PC-9 (cell line): ENCODE measurements at regions of chr1 and their contacts with region 1.

Region 1: GRCh38 chr1:235938709-235939479 is 72.2 kb upstream of the LYST start:
- DNase-seq: no peak
- H3K4me3 ChIP-seq: no peak overlapping the region
- H3K27ac ChIP-seq: no peak overlapping the region
- H3K4me1 ChIP-seq: peaks cover 10% of the 10 kb centered on the region
- H3K27me3 ChIP-seq: no peaks in the 10 kb centered on the region
- CTCF ChIP-seq: no peak

Region 2: DNA sequence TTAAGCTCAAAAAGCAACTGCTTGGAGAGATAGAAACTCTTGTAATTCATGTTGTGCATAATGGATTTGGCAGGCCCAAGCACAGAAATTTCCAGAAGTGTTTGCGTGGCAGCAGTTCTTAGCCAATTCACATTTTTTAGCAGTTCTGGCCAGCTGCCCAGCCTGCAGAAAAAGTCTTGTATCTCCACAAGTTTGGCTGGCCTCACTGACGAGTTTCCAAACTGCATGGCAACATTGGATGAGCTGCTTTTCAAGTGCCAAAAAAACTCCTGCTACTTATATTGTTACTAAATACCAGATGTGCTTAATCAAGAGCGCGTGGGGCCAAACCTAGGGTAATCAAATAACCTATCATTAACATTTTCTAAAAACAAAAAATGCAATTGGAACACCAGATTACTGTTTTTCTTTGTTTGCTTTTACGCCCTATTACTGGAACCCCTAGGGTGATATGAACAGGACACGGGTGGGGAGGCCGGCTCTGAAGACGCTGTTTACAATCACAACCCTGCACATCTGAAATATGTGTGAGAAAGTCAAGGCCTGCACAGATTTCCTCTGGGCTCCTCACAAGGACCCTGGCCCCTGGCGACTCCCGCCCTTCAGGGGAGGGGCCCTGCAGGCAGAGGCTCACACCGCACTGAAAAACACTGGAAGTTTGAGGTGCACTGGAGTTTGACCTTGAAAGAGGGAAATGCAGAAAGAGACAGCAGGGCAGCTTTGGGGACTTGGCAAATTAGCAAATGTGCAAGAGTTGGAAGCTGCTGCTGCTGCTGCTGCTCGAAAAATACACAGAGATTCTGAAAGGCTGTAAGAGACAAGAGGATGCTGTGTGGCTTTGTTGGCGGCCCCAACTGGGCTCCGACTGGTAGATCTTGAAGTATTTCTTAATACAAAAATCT is 1404.7 kb before region 1 on chr1:
- CTCF ChIA-PET with region 1: no interaction called
- POLR2A ChIA-PET with region 1: no interaction called
- intact Hi-C with region 1: no loop called
- DNase-seq: peak; percentile 28 to 56
- H3K4me3 ChIP-seq: no peak overlapping the region
- H3K27ac ChIP-seq: peak overlapping the region; percentile 90
- H3K4me1 ChIP-seq: peaks cover 49% of the 10 kb centered on the region
- H3K27me3 ChIP-seq: no peaks in the 10 kb centered on the region
- CTCF ChIP-seq: no peak

Region 3: DNA sequence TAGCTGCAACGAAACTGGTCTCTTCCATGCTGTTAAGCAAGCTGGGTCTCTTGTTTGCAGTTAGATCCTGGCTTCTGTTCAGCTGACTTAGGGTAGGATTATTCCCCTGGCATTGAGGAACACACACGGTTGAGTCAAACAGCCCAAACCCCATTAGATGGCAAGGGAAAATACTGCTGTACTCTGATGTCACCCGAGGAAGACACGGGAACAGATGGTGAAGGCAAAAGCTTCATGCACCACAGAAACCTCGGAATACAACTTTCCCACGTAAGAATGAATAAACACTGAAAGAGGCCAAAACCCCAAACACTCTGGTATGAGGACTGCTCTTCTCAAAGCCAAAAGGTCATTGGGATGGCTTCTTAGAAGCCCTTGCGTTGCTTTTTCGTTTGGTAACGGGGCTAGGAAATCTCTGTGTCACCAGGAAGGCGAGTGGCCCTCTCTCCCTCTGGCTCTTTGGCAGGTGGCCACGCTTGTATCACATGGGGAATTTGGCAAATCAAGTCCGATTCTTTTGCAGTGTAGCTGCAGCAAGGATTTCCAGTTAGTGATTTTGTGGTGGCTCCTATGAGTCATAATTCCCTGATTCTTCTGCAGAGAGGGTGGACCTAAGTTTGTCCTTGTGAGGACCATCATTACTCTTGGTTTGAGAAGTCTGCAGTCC is 55.5 kb before region 1 on chr1:
- CTCF ChIA-PET with region 1: no interaction called
- POLR2A ChIA-PET with region 1: interaction called, 11 read pairs
- intact Hi-C with region 1: no loop called
- DNase-seq: peak; percentile 89
- H3K4me3 ChIP-seq: peak overlapping the region; percentile 13; the same call in 1 of the 2 replicates
- H3K27ac ChIP-seq: peak overlapping the region; percentile 32
- H3K4me1 ChIP-seq: peaks cover 15% of the 10 kb centered on the region
- H3K27me3 ChIP-seq: no peaks in the 10 kb centered on the region
- CTCF ChIP-seq: no peak

Region 4: GRCh38 chr1:235917267-235917811 is 21.6 kb before region 1 on chr1:
- CTCF ChIA-PET with region 1: no interaction called
- POLR2A ChIA-PET with region 1: no interaction called
- intact Hi-C with region 1: no loop called
- DNase-seq: peak; percentile 83 to 99
- H3K4me3 ChIP-seq: no peak overlapping the region
- H3K27ac ChIP-seq: peak overlapping the region; percentile 91
- H3K4me1 ChIP-seq: peaks cover 76% of the 10 kb centered on the region
- H3K27me3 ChIP-seq: no peaks in the 10 kb centered on the region
- CTCF ChIP-seq: no peak

Region 5: DNA sequence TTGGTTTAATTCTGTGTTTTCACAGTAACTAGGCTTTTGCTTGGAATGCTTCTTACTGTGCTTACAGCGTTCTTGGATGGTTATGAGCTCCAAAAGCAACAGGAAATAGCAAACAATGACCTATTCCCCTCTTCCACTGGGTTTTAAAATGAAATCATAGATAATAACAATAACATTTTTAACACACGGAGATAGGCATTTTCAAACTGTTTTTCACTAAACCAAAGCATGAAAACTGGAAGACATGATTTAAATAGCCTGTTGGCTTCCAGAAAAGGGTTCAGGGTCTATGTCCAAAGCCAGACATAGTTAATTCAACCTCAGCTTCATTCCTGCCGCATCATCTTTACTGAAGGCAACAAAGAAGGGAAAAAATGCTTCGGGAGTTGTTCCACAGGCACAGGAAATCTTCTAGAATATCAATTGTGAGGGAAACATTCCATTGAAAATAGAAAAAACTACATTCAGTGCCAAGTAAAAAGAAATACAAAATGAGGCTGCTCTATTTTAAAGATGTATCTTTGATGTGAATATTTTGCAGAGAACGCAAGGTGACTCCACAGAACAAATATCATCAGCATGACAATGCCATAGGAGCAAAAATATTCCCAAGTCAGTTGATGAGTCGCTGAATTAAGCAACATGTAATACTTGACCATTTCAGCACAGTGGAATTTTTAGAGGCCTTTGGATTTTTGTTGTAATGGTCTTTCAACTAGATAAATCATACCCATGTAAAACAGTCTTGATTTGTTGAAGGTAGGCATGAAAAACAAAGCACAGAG is 45.3 kb after region 1 on chr1:
- CTCF ChIA-PET with region 1: no interaction called
- POLR2A ChIA-PET with region 1: no interaction called
- intact Hi-C with region 1: no loop called
- DNase-seq: peak in 1 of 2 experiments; percentile 62
- H3K4me3 ChIP-seq: no peak overlapping the region
- H3K27ac ChIP-seq: peak overlapping the region; percentile 44
- H3K4me1 ChIP-seq: peaks cover 6% of the 10 kb centered on the region
- H3K27me3 ChIP-seq: no peaks in the 10 kb centered on the region
- CTCF ChIP-seq: no peak